Panc1 (cell line): ENCODE measurements at regions of chr15 and their contacts with region 1.

Region 1: GRCh38 chr15:34182942-34183341 is 27.0 kb downstream of the KATNBL1 start:
- DNase-seq: no peak
- ATAC-seq: no peak
- H3K4me3 ChIP-seq: no peak overlapping the region
- H3K27ac ChIP-seq: no peak overlapping the region
- H3K4me1 ChIP-seq: no peaks in the 10 kb centered on the region
- H3K27me3 ChIP-seq: no peaks in the 10 kb centered on the region
- CTCF ChIP-seq: no peak

Region 2: GRCh38 chr15:34102176-34102925 is 80.6 kb before region 1 on chr15:
- CTCF ChIA-PET with region 1: no interaction called
- POLR2A ChIA-PET with region 1: interaction called, 10 read pairs
- in situ Hi-C with region 1: no loop called
- intact Hi-C with region 1: no loop called
- DNase-seq: no peak
- ATAC-seq: peak; percentile 51
- H3K4me3 ChIP-seq: peak overlapping the region; percentile 90 to 98
- H3K27ac ChIP-seq: peak overlapping the region; percentile 92
- H3K4me1 ChIP-seq: no peaks in the 10 kb centered on the region; the same call in 1 of the 2 replicates
- H3K27me3 ChIP-seq: no peaks in the 10 kb centered on the region
- CTCF ChIP-seq: no peak

Region 3: DNA sequence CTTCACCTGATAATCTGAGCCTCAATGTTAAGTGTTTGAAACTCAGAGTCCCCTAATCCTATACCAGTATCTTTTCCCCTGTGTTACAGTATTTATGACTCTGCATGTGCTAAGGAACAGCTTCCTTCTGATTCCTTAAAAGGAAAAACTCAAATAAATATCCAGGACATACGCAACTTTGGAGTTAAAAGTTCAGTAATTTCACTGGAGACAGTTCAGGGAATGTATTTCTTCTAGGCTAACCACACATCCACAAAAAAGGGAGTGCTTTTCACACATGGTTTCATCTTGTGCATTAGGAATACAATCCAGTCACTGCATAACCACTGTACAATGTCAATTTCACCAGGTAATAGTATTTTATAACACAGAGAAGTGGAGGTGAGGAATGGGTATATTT is 50.1 kb before region 1 on chr15:
- CTCF ChIA-PET with region 1: interaction called, 12 read pairs
- POLR2A ChIA-PET with region 1: no interaction called
- in situ Hi-C with region 1: no loop called
- intact Hi-C with region 1: no loop called
- DNase-seq: no peak
- ATAC-seq: no peak
- H3K4me3 ChIP-seq: no peak overlapping the region
- H3K27ac ChIP-seq: no peak overlapping the region
- H3K4me1 ChIP-seq: no peaks in the 10 kb centered on the region
- H3K27me3 ChIP-seq: no peaks in the 10 kb centered on the region
- CTCF ChIP-seq: no peak